Activated CD8-positive, alpha-beta memory T cell treated with anti-CD3 and anti-CD28 coated beads, Interleukin-2, amount 10 ng/mL, durations not matched to agents 7 days and 5 days (primary cell): ENCODE measurements at regions of chr1 and their contacts with region 1.

Region 1: GRCh38 chr1:156892190-156893047 is 1.1 kb upstream of the PEAR1 start:
- DNase-seq: peak; percentile 91
- ATAC-seq: peak; percentile 97
- H3K4me3 Mint-ChIP-seq: peak overlapping the region; percentile 39
- H3K27ac Mint-ChIP-seq: no peak overlapping the region
- H3K4me1 Mint-ChIP-seq: peaks cover 12% of the 10 kb centered on the region
- H3K27me3 Mint-ChIP-seq: peaks cover 68% of the 10 kb centered on the region

Region 2: GRCh38 chr1:156705918-156706656 is 186.3 kb before region 1 on chr1:
- CTCF ChIA-PET with region 1: interaction called, 10 read pairs
- DNase-seq: peak; percentile 70
- ATAC-seq: peak; percentile 77
- H3K4me3 Mint-ChIP-seq: peak overlapping the region; percentile 56
- H3K27ac Mint-ChIP-seq: no peak overlapping the region
- H3K4me1 Mint-ChIP-seq: peaks cover 20% of the 10 kb centered on the region
- H3K27me3 Mint-ChIP-seq: peaks cover 43% of the 10 kb centered on the region

Region 3: DNA sequence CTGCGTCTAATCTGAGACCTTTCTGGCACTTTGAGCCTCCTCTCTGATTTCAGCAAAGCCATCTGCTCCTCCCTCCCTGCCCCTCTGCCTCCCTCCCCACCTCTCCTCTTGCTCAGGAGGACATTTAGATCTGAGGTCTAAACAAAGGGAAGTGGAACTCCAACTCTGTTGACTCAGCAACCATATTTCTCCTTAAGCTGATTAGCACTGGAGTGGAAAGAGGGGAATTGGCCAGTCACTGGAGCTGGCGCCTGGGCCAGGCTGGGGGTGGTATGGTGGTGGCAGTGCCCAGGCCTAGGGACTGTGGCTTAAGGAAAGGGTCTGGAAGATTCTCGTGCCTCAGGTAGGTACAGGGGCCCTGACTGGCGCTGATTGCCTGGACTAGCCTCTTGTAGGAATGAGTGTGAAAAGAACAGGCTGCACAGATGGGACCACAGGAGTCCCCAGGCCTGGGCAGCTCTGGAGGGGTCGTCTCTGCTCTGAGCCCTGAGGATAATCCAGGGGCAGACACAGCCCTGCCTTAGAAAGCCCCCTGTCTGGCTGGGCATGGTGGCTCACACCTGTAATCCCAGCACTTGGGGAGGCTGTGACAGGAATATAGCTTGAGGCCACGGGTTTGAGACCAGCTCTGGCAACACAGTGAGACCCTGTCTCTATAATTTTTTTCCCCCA is 87.7 kb before region 1 on chr1:
- CTCF ChIA-PET with region 1: interaction called, 28 read pairs
- DNase-seq: no peak
- ATAC-seq: no peak
- H3K4me3 Mint-ChIP-seq: no peak overlapping the region
- H3K27ac Mint-ChIP-seq: peak overlapping the region; percentile 64
- H3K4me1 Mint-ChIP-seq: peaks cover 59% of the 10 kb centered on the region
- H3K27me3 Mint-ChIP-seq: no peaks in the 10 kb centered on the region

Region 4: DNA sequence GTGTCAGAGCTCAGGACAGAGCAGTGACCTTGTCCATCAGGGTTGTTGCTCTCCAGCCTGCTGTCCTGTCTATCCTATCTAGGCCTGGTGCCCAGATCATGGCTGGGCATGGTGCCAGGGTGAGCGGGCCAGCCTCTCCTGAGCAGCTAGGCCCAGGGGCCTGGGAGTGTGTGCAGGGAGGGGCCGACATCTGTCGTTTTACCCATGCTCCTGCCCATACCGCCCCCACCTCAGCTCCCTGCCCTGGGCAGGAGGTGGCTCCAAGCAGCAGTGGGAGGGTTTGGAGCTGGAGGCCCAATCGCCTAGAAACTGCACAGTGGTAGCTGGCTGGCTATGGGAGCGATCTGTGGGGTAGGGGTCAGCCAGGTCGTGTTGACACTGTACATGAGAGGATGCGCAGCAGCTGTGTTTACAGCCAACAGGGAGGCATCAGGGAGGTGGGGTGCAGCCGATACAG is 40.0 kb before region 1 on chr1:
- CTCF ChIA-PET with region 1: interaction called, 105 read pairs
- DNase-seq: no peak
- ATAC-seq: no peak
- H3K4me3 Mint-ChIP-seq: no peak overlapping the region
- H3K27ac Mint-ChIP-seq: no peak overlapping the region
- H3K4me1 Mint-ChIP-seq: peaks cover 15% of the 10 kb centered on the region
- H3K27me3 Mint-ChIP-seq: peaks cover 27% of the 10 kb centered on the region

Region 5: DNA sequence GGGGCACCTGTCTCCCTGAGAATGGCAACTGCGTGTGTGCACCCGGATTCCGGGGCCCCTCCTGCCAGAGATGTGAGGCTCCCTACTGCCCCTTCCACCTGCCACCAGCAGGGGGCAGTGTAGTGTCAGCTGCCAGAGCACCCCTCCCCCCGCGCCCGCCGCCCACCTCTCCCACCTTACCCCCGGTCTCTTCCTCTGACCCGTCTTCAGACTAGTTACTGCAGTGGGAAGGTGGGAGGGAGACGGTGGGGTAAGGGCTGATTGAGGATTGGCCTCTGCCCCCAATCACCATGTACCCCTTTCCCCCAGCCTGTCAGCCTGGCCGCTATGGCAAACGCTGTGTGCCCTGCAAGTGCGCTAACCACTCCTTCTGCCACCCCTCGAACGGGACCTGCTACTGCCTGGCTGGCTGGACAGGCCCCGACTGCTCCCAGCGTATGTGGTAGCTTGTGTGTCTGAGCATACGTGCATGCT is 17.9 kb after region 1 on chr1:
- CTCF ChIA-PET with region 1: interaction called, 11 read pairs
- DNase-seq: peak; percentile 65
- ATAC-seq: peak; percentile 66
- H3K4me3 Mint-ChIP-seq: no peak overlapping the region
- H3K27ac Mint-ChIP-seq: no peak overlapping the region
- H3K4me1 Mint-ChIP-seq: no peaks in the 10 kb centered on the region
- H3K27me3 Mint-ChIP-seq: peaks cover 21% of the 10 kb centered on the region

Region 6: DNA sequence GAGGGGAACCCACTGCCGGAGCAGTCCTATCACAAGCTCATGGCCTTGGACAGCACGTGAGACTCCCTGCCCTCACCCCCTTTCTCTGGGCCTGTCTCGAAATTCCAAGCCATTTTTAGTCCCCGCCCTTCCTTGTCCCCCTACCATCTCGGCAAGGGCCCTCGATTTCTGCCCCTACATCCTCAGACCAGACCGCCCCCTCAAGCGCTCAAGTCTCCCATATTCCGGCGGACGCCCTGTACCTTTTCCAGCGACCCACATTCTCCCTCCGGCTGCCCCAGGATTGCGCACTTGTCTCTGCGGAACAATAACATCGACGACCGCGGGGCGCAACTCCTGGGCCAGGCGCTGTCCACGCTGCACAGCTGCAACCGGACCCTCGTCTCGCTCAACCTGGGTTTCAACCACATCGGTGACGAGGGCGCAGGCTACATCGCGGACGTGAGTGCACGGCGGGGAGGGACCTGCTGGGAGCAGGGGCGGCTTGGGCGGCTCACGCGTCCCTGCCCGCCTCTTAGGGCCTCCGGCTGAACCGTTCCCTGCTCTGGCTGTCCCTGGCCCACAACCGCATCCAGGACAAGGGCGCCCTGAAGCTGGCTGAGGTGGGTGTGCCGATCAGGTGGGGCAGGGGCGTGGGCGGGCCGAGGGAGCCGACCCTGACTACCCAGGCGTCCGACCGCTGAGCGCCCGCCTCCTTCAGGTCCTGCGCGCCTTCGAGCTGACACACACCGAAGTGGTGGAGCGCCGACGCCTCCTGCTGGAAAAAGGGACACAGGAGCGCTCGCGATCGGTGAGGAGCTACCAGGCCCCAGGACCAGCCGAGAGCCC is 35.0 kb after region 1 on chr1:
- CTCF ChIA-PET with region 1: interaction called, 62 read pairs
- DNase-seq: peak; percentile 75
- ATAC-seq: peak; percentile 79
- H3K4me3 Mint-ChIP-seq: no peak overlapping the region
- H3K27ac Mint-ChIP-seq: no peak overlapping the region
- H3K4me1 Mint-ChIP-seq: peaks cover 33% of the 10 kb centered on the region
- H3K27me3 Mint-ChIP-seq: peaks cover 95% of the 10 kb centered on the region